Activated CD4-positive, alpha-beta memory T cell treated with anti-CD3 and anti-CD28 coated beads for 36 hours (primary cell): ENCODE measurements at regions of chrX and their contacts with region 1.

Region 1: DNA sequence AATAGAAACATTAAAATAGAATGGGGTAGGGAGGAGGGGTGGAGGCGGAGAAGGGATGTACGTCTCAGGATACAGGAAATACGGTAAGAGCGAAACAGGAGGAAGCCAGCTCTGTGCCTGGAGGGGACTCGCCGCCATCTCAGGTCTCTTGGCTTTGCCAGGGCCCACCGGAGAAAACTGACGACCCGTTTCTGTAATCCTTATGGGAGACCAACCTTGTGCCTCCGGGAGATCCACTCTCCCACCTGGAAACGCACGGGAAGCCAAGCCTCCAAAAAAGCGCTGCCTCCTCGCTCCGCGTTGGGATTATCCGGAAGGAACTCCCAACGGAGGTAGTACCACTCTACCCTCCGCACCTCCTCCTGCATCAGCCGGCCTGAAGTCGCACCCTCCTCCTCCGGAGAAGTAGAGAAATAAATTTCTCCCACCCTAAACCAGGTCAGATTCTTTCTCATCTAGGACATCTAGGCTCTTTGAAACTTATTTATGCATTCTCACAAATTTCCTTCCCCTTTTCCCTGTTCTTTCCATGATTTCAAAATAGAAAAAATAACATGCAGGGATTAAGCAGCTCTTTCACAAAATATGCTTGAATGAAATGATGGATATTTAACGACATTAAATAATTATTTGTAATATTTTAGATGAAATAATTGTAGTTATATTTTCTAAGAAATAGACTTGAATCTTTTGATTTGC is at the start of gene NBDY:
- DNase-seq: peak; percentile 45
- H3K4me3 Mint-ChIP-seq: peak within 1 kb of the TSS; percentile 82
- H3K27ac Mint-ChIP-seq: peak within 1 kb of the TSS; percentile 87
- H3K4me1 Mint-ChIP-seq: peaks cover 24% of the 10 kb centered on the region
- H3K27me3 Mint-ChIP-seq: no peaks in the 10 kb centered on the region
- total RNA-seq, gene NBDY: 45.1 to 50.0 TPM

Region 2: GRCh38 chrX:56219700-56220099 is 509.6 kb before region 1 on chrX:
- CTCF ChIA-PET with region 1: no interaction called
- POLR2A ChIA-PET with region 1: no interaction called
- intact Hi-C with region 1: loop called (anchors 1 kb)
- DNase-seq: no peak
- H3K4me3 Mint-ChIP-seq: no peak overlapping the region
- H3K27ac Mint-ChIP-seq: no peak overlapping the region
- H3K4me1 Mint-ChIP-seq: no peaks in the 10 kb centered on the region
- H3K27me3 Mint-ChIP-seq: no peaks in the 10 kb centered on the region

Region 3: DNA sequence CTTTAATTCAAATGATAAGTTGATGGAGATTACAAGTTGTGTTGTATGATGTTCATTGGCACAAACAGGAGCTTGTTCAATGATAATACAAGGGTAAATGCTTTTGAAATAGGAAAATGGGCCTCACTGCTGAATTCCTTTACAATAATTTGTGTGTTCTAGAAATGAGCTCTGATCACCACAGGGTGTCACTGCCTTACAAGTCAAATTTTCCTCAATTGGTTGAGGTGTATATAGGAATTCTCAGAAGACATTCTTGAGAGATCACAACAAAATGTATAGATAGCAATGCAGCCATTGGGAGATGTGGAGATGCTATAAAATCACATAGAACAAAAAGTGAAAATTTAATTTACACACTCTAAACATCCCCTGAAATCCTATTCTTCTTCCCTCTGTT is 447.5 kb before region 1 on chrX:
- CTCF ChIA-PET with region 1: interaction called, 88 read pairs
- POLR2A ChIA-PET with region 1: no interaction called
- intact Hi-C with region 1: loop called (anchors 1 kb)
- DNase-seq: no peak
- H3K4me3 Mint-ChIP-seq: no peak overlapping the region
- H3K27ac Mint-ChIP-seq: no peak overlapping the region
- H3K4me1 Mint-ChIP-seq: peaks cover 9% of the 10 kb centered on the region
- H3K27me3 Mint-ChIP-seq: no peaks in the 10 kb centered on the region

Region 4: DNA sequence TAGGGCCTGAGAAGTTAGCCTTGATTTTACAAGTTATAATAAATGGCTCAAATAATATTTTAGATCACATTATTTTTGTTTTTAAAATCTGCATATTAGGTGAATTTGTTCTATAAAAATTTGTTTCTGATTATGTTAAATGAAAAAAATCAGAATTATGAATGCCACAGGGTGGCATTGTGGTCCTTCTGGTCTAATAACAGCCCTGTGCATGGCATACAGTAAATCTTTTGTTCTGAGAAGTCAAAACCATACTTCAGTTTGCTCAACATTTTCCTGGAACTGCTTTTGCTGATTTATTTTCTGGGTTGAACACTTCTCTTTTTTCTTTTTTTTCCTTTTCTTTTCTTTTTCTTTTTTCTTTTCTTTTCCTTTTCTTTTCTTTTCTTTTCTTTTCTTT is 266.9 kb before region 1 on chrX:
- CTCF ChIA-PET with region 1: no interaction called
- POLR2A ChIA-PET with region 1: no interaction called
- intact Hi-C with region 1: loop called (anchors 5 kb)
- DNase-seq: no peak
- H3K4me3 Mint-ChIP-seq: no peak overlapping the region
- H3K27ac Mint-ChIP-seq: peak overlapping the region; percentile 58
- H3K4me1 Mint-ChIP-seq: peaks cover 15% of the 10 kb centered on the region
- H3K27me3 Mint-ChIP-seq: no peaks in the 10 kb centered on the region

Region 5: DNA sequence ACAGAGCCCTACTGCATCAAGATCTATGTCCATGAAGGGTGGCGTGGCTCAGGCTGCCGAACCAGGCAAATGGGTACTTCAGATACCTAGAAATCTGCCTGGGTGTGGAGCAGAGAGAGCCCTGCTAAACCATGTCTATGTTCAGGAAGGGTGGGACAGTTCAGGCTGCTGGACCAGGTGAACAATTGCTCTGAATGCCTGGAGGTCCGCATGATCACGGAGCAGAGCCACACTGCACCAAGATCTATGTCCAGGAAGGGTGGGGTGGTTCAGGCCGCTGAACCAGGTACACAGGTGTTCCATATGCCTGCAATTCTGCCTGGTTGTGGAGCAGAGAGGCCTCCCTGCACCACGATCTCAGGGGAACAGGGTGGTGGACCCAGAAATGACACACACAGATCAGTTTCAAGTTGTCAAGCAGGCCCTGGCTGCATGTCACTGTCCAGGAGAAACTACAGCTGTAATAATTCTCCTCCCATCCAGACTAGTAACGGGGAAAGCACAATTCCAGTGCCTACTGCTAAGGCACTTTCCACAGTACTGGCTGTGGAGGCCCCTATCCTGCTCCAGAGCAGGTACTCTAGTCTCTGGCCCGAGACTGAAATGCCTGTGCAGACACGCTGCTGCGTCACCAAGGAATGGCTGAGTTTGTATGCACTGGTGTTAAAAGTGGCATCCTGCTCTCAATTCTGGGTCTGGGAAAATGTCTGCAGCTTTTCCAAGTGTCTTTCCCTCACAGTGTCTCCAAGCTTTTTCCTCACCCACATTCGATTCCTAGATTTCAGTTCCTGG is 140.7 kb before region 1 on chrX:
- CTCF ChIA-PET with region 1: no interaction called
- POLR2A ChIA-PET with region 1: no interaction called
- intact Hi-C with region 1: no loop called
- DNase-seq: no peak
- H3K4me3 Mint-ChIP-seq: no peak overlapping the region
- H3K27ac Mint-ChIP-seq: no peak overlapping the region
- H3K4me1 Mint-ChIP-seq: peaks cover 3% of the 10 kb centered on the region
- H3K27me3 Mint-ChIP-seq: no peaks in the 10 kb centered on the region

Region 6: DNA sequence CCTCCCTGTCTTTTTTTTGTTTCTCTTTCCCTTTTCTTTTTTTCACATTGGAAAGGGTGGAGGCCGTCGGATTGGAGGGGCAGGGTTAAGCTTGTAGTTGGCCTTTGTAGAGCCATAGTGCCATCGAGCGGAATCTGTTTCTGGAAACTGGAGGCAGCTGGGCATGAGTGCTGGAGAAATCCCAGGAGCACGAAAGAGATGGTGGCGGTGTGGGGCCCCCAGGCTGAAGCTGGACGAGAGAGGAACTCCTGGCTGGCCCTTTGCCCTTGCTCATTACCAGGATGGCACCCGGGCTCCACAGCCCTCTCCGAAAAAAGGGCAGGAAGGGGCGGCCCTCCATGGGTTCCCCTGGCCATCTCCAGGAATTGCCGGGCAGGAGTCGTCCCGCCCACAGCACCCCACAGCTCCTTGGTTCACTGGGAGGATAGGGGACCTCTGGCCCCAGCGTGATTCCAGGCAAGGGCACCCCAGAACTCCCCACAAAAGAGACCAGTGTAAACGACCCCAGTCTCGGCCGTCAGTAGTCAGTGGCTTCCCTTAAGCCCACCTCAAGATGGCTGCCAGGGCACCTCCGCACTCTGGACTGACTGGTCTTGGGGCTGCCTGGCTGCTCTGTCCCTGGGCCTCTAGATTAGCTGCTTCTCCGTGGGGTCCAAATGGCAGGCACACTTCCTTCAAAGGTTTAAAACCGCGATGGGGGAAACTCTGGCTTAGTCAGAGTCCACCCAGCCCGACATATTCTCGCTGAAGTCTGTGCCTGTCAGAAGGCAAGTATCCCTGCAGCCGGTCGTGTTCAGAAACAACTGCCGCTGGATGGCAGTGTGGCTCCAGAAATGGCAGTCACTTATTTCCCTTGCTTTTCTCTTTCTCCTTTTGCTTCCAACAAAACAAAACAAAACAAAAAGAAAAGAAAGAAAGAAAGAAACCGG is 73.9 kb after region 1 on chrX:
- CTCF ChIA-PET with region 1: no interaction called
- POLR2A ChIA-PET with region 1: no interaction called
- intact Hi-C with region 1: loop called (anchors 2 kb)
- DNase-seq: peak; percentile 69
- H3K4me3 Mint-ChIP-seq: no peak overlapping the region
- H3K27ac Mint-ChIP-seq: peak overlapping the region; percentile 42
- H3K4me1 Mint-ChIP-seq: peaks cover 34% of the 10 kb centered on the region
- H3K27me3 Mint-ChIP-seq: no peaks in the 10 kb centered on the region

Region 7: DNA sequence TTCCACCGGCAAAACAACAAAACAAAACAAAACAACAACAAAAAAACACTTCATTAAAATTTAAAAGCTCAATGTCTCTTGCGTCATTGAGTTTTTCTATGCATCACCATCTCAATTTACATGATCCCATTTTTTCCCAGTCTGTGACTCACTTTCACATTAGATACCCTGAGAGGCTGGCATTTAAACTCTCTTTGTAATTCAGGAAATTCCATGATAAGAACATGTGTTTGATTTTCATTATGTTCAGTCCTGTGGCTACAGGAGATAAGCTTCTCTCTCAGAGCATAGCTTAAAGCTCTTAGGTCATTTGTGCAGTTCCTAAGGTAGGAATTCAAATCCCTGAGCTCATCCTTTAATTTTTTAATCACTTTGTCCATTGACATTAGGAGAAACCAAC is 104.3 kb after region 1 on chrX:
- CTCF ChIA-PET with region 1: no interaction called
- POLR2A ChIA-PET with region 1: no interaction called
- intact Hi-C with region 1: no loop called
- DNase-seq: no peak
- H3K4me3 Mint-ChIP-seq: no peak overlapping the region
- H3K27ac Mint-ChIP-seq: no peak overlapping the region
- H3K4me1 Mint-ChIP-seq: no peaks in the 10 kb centered on the region
- H3K27me3 Mint-ChIP-seq: no peaks in the 10 kb centered on the region

Region 8: DNA sequence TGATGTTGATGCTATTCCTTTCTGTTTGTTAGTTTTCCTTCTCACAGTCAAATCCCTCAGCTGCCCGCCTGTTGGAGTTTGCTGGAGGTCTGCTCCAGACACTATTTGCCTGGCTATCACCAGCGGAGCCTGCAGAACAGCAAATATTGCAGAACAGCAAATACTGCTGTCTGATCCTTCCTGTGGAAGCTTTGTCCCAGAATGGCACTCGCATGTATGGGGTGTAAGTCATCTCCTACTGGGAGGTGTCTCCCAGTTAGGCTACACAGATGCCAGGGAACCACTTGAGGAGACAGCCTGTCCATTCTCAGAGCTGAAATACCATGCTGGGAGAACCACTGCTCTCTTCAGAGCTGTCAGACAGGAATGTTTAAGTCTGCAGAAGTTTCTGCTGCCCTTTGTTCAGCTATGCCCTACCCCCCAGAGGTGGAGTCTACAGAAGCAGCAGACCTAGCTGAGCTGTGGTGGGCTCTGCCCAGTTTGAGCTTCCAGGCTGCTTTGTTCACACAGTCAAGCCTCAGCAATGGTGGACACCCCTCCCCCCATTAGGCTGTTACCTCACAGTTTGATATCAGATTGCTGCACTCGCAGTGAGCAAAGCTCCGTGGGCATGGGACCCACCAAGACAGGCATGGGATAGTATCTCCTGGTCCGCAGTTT is 191.2 kb after region 1 on chrX:
- CTCF ChIA-PET with region 1: no interaction called
- POLR2A ChIA-PET with region 1: no interaction called
- intact Hi-C with region 1: no loop called
- DNase-seq: no peak
- H3K4me3 Mint-ChIP-seq: no peak overlapping the region
- H3K27ac Mint-ChIP-seq: no peak overlapping the region
- H3K4me1 Mint-ChIP-seq: no peaks in the 10 kb centered on the region
- H3K27me3 Mint-ChIP-seq: no peaks in the 10 kb centered on the region